OCI-LY7 (cell line): ENCODE measurements at regions of chr17 and their contacts with region 1.

Region 1: DNA sequence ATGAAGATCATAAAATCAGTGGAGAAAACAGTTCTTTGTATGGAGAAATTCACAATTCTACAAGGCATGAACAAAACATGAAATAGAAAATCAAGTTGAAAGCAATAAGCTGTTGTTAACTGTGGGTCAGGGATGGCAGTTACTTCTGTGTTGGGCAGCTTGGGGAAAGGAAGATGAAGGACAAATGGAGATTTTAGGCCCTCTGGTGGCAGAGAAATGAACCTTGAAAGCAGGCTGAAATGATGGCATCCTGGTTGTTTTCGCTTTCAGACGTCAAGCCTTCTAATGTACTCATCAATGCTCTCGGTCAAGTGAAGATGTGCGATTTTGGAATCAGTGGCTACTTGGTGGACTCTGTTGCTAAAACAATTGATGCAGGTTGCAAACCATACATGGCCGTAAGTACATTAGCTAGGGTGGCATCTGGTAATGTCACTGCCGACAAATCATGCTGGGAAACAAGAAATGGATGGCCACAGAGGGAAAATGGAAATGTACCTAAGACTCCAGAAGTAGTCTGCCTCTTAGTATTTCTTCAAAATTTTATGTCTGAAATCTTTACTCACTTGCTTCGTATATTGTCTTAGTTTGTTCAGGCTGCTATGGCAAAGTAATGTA is 108.9 kb downstream of the MAP2K6 start:
- DNase-seq: peak; percentile 71
- H3K4me3 ChIP-seq: no peak overlapping the region
- H3K27ac ChIP-seq: no peak overlapping the region
- H3K4me1 ChIP-seq: peaks cover 5% of the 10 kb centered on the region
- CTCF ChIP-seq: peak; percentile 89

Region 2: GRCh38 chr17:68771867-68772515 is 751.4 kb before region 1 on chr17:
- CTCF ChIA-PET with region 1: no interaction called
- POLR2A ChIA-PET with region 1: no interaction called
- intact Hi-C with region 1: loop called (anchors 5 kb)
- DNase-seq: peak; percentile 80
- H3K4me3 ChIP-seq: peak overlapping the region; percentile 21
- H3K27ac ChIP-seq: no peak overlapping the region
- H3K4me1 ChIP-seq: peaks cover 22% of the 10 kb centered on the region
- CTCF ChIP-seq: peak; percentile 90

Region 3: GRCh38 chr17:69335058-69335457 is 188.3 kb before region 1 on chr17:
- CTCF ChIA-PET with region 1: no interaction called
- POLR2A ChIA-PET with region 1: interaction called, 3 read pairs
- intact Hi-C with region 1: loop called (anchors 1 kb)
- DNase-seq: peak; percentile 62
- H3K4me3 ChIP-seq: no peak overlapping the region
- H3K27ac ChIP-seq: no peak overlapping the region
- H3K4me1 ChIP-seq: no peaks in the 10 kb centered on the region
- CTCF ChIP-seq: peak; percentile 80

Region 4: GRCh38 chr17:69404382-69404781 is 119.0 kb before region 1 on chr17:
- CTCF ChIA-PET with region 1: no interaction called
- POLR2A ChIA-PET with region 1: interaction called, 4 read pairs
- intact Hi-C with region 1: loop called (anchors 5 kb)
- DNase-seq: no peak
- H3K4me3 ChIP-seq: no peak overlapping the region
- H3K27ac ChIP-seq: no peak overlapping the region
- H3K4me1 ChIP-seq: no peaks in the 10 kb centered on the region
- CTCF ChIP-seq: no peak

Region 5: GRCh38 chr17:69501591-69502468 is 21.5 kb before region 1 on chr17:
- CTCF ChIA-PET with region 1: interaction called, 7 read pairs
- POLR2A ChIA-PET with region 1: interaction called, 20 read pairs
- intact Hi-C with region 1: no loop called
- DNase-seq: peak; percentile 61
- H3K4me3 ChIP-seq: peak overlapping the region; percentile 50
- H3K27ac ChIP-seq: peak overlapping the region; percentile 67
- H3K4me1 ChIP-seq: peaks cover 55% of the 10 kb centered on the region
- CTCF ChIP-seq: no peak

Region 6: GRCh38 chr17:70552230-70552981 is 1029.1 kb after region 1 on chr17:
- CTCF ChIA-PET with region 1: no interaction called
- POLR2A ChIA-PET with region 1: no interaction called
- intact Hi-C with region 1: loop called (anchors 5 kb)
- DNase-seq: peak; percentile 69
- H3K4me3 ChIP-seq: no peak overlapping the region
- H3K27ac ChIP-seq: no peak overlapping the region
- H3K4me1 ChIP-seq: no peaks in the 10 kb centered on the region
- CTCF ChIP-seq: peak; percentile 87